ENCODE measurements at regions of chr11 and their contacts with region 1.

Region 1: GRCh38 chr11:10925144-10925926 is 67.5 kb upstream of the ZBED5 start:
- DNase-seq: no peak
- H3K4me3 ChIP-seq: no peak overlapping the region
- H3K27ac ChIP-seq: peak overlapping the region in 2 of 4 donors; percentile 39 to 61
- H3K4me1 ChIP-seq: peaks cover 0 to 45% (median 6%) of the 10 kb centered on the region in 3 donors
- H3K27me3 ChIP-seq: no peaks in the 10 kb centered on the region
- CTCF ChIP-seq: no peak
- POLR2A ChIP-seq: no peak

Region 2: GRCh38 chr11:10808553-10809372 is 116.6 kb before region 1 on chr11 and contains the start of gene EIF4G2:
- intact Hi-C with region 1: loop called (anchors 5 kb)
- DNase-seq: peak; percentile 94
- H3K4me3 ChIP-seq: peak within 1 kb of the TSS; percentile 86 to 95 (median 94)
- H3K27ac ChIP-seq: peak within 1 kb of the TSS; percentile 97 to 99 (median 99)
- H3K4me1 ChIP-seq: peaks cover 12 to 44% (median 30%) of the 10 kb centered on the region in 3 donors
- H3K27me3 ChIP-seq: no peaks in the 10 kb centered on the region
- CTCF ChIP-seq: peak in 2 of 6 experiments; percentile 2 to 32
- POLR2A ChIP-seq: peak; percentile 76 to 100 (median 96)
- total RNA-seq, gene EIF4G2: 476 to 665 (median 547) TPM

Region 3: GRCh38 chr11:10955616-10956015 is 30.3 kb after region 1 on chr11:
- intact Hi-C with region 1: no loop called
- DNase-seq: no peak
- H3K4me3 ChIP-seq: no peak overlapping the region
- H3K27ac ChIP-seq: no peak overlapping the region
- H3K4me1 ChIP-seq: no peaks in the 10 kb centered on the region
- H3K27me3 ChIP-seq: peaks cover 0 to 4% (median 0%) of the 10 kb centered on the region in 4 donors
- CTCF ChIP-seq: no peak
- POLR2A ChIP-seq: no peak

Region 4: DNA sequence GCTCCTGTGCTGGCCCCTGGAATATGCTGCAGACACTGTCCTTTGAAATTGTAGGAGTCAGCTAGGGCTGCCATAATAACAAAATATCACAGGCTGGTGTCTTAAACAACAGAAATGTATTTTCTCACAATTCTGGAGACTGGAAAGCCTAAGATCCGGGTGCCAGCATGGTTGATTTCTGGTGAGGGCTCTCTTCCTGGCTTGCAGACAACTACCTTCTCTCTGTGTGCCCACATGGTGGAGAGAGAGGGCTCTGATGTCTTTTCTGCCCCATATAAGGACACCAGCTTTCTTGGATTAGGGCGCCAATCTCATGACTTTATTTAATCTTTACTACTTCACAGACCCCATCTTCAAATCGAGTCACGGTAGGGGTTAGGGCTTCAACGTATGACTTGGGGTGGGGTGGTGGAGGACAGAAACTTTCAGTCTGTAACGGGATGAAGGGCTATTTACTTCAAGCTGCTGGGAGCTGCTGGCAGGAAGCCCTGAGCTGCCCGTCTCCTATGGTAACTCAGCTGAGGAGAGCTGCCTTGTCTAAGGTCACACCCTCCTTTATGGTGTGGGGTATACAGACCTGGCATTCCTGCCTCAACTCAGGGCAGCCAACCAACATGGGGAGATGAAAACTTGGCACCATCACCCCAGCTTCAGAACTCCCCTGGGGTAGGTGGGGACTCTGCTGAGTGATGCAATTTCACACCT is 75.4 kb after region 1 on chr11:
- intact Hi-C with region 1: no loop called
- DNase-seq: no peak
- H3K4me3 ChIP-seq: no peak overlapping the region
- H3K27ac ChIP-seq: no peak overlapping the region
- H3K4me1 ChIP-seq: no peaks in the 10 kb centered on the region
- H3K27me3 ChIP-seq: peaks cover 0 to 38% (median 0%) of the 10 kb centered on the region in 4 donors
- CTCF ChIP-seq: no peak
- POLR2A ChIP-seq: no peak

Measured in esophagus squamous epithelium (tissue), 5 donors.